IMR-90 (cell line): ENCODE measurements at regions of chr1 and their contacts with region 1.

Region 1: DNA sequence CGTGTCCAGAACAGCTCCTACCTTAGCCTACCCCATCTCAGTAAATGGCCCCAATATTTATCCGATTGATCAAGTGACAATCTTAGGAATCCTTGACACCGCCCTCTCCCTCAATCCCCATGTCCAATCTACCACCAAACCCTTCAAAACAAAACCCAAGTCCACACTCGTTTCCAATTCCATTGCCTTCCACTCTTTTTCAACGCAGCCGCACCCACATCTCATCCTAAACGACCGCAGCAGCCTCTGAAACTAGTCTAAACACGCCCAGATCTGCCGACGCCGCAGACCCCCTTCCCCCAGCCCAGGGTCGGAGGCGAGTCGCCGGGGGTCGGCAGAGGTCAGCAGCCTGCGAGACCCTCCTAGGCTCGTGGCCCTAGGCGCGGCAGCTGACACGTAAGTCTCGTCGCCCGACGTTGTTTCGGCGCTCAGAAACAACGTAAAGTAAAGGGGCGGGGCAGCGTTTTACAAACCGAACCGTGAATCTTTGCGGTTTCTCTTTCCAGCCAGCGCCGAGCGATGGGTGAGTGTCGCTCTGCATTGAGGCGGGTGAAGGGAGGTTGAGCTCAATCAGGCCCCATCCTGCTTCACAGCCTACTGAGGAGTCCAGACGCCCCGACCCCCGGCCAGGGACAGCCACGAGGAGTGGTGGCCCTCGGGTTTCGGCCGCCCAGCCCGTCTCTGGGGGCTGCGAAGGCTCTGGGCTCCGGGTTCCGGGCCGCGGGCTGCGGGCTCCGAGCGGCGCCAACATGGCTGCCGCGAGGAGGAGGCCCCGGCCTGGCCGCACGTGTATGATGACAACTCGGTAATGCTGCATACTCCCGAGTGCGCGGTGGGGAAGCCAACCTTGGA is at the start of gene RPS8:
- DNase-seq: peak; percentile 93
- ATAC-seq: peak; percentile 87
- H3K4me3 ChIP-seq: peak within 1 kb of the TSS; percentile 78
- H3K27ac ChIP-seq: peak within 1 kb of the TSS; percentile 91
- H3K4me1 ChIP-seq: peaks cover 12% of the 10 kb centered on the region
- H3K27me3 ChIP-seq: no peaks in the 10 kb centered on the region
- CTCF ChIP-seq: no peak
- POLR2A ChIP-seq: peak; percentile 99
- RAD21 ChIP-seq: no peak
- total RNA-seq, gene RPS8: 1,837 and 2,171 TPM in 2 replicates

Region 2: DNA sequence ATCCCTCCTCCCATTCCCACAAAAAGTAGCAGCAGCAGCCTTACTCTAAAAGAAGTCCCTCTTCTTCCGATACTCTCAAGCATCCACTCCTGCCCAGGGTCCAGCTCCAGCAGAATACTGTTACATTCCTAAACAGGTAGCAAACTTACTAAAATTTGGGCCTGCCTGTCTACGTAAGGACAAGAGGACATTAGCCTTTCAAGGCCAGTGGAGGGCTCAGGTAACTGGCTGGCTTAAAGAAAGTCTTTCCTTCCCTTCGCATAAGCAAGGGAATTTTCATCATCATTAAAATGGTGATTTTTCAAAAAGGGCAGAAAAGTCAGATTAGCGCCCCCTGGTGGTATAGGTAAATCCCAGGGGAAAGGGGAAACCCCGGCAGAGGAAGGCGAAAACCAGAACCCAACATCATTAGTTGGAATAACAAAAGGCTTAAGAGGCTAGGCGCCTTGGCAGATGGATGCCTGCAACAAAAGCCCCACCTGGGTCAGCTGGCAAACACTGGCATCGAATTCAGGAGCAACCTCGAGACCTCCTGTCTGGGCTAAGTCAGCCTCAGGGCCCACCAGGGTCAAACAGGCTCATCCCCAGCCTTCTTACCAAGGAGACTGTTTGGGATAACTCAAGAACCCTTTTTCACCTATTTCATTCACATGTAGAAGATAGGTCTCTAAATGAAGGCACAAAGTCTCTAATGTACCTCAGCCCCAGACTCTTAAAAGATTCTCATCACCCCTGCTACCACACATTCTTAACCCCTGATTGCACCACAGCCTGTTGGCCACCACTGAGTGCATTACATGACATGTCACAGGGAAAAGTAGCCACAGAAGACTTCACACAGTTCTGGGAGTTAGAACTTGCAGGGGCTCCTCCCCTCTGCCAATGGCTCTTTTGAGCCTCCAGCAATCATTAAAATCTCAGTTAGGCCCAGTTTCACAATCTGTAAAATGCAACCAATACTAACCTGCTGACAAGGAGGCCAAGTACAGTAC is 456.9 kb before region 1 on chr1:
- CTCF ChIA-PET with region 1: no interaction called
- POLR2A ChIA-PET with region 1: no interaction called
- dilution Hi-C with region 1: no loop called
- in situ Hi-C with region 1: no loop called
- intact Hi-C with region 1: no loop called
- DNase-seq: peak; percentile 23
- ATAC-seq: peak; percentile 68
- H3K4me3 ChIP-seq: no peak overlapping the region
- H3K27ac ChIP-seq: no peak overlapping the region
- H3K4me1 ChIP-seq: no peaks in the 10 kb centered on the region
- H3K27me3 ChIP-seq: no peaks in the 10 kb centered on the region
- CTCF ChIP-seq: peak; percentile 74
- POLR2A ChIP-seq: no peak
- RAD21 ChIP-seq: peak; percentile 56

Region 3: GRCh38 chr1:44531785-44532566 is 243.3 kb before region 1 on chr1:
- CTCF ChIA-PET with region 1: no interaction called
- POLR2A ChIA-PET with region 1: no interaction called
- dilution Hi-C with region 1: no loop called
- in situ Hi-C with region 1: no loop called
- intact Hi-C with region 1: no loop called
- DNase-seq: peak; percentile 54
- ATAC-seq: peak; percentile 32
- H3K4me3 ChIP-seq: no peak overlapping the region
- H3K27ac ChIP-seq: no peak overlapping the region
- H3K4me1 ChIP-seq: no peaks in the 10 kb centered on the region
- H3K27me3 ChIP-seq: peaks cover 12% of the 10 kb centered on the region
- CTCF ChIP-seq: no peak
- POLR2A ChIP-seq: no peak
- RAD21 ChIP-seq: no peak

Region 4: GRCh38 chr1:44739361-44740178 is 35.7 kb before region 1 on chr1 and contains the start of gene KIF2C:
- CTCF ChIA-PET with region 1: no interaction called
- POLR2A ChIA-PET with region 1: no interaction called
- dilution Hi-C with region 1: no loop called
- in situ Hi-C with region 1: no loop called
- intact Hi-C with region 1: loop called (anchors 2 kb)
- DNase-seq: peak; percentile 97
- ATAC-seq: peak; percentile 100
- H3K4me3 ChIP-seq: peak within 1 kb of the TSS; percentile 77
- H3K27ac ChIP-seq: peak within 1 kb of the TSS; percentile 63
- H3K4me1 ChIP-seq: peaks cover 4% of the 10 kb centered on the region
- H3K27me3 ChIP-seq: no peaks in the 10 kb centered on the region
- CTCF ChIP-seq: 0 out of 2 replicates have a peak, but pooled peaks have one; percentile 4
- POLR2A ChIP-seq: peak; percentile 61
- RAD21 ChIP-seq: no peak
- total RNA-seq, gene KIF2C: 40.5 and 45.0 TPM in 2 replicates